ENCODE measurements at regions of chr3 and their contacts with region 1.

Region 1: DNA sequence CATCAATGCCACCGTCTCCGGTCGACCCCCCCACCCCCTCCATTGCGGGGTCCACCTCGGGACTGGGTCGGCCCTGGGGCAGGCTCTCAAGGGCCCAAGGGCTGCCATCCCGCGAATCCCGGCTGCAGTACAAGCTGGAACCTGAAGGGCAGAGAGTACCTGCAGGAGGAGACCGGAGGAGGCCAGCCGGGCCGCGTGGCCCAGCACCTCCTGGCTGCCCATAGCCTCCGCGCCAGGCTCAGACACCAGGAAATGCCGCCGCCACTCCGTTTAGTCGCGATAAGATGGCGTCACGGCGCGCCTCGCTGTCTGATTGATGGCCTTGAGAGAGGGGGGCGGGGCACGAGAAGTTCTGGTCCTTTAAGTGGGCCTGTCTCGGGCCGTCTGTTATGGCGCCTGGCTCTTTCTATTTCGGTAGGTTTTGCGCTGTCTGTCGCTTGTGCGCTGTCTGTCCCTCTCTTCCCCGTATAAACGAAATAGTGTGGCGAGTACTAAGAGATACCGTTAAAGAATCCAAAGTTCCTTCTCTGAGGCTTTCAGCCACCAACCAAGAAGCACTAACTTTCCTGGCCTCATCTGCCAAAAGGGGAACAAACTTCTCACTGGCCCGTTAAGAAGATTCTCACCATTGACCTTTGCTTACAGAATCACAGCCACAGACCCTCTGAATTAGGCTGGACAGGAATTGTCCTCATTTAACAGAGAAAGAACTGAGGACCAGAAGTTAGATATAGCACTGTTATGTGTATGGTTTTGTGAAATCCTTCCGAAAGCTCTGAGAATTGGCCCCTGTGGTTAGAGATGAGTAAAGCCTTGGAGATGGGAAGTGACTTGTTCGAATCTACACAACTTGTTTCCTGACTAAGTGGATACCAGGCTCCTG is at the start of gene RFT1:
- DNase-seq: peak; percentile 96 to 98
- ATAC-seq: peak; percentile 85 to 90
- H3K4me3 ChIP-seq: peak within 1 kb of the TSS; percentile 80 to 93 (median 92)
- H3K27ac ChIP-seq: peak within 1 kb of the TSS; percentile 91 to 94 (median 94)
- H3K4me1 ChIP-seq: peaks cover 29 to 32% of the 10 kb centered on the region in 2 donors
- H3K27me3 ChIP-seq: no peaks in the 10 kb centered on the region
- CTCF ChIP-seq: peak in 2 of 5 experiments; percentile 44 to 49
- POLR2A ChIP-seq: peak; percentile 62 to 71
- total RNA-seq, gene RFT1: 2.5 to 5.7 (median 5.2) TPM

Region 2: GRCh38 chr3:53045518-53046170 is 84.8 kb before region 1 on chr3 and contains the start of gene SFMBT1:
- in situ Hi-C with region 1: no loop called
- intact Hi-C with region 1: loop called (anchors 2 kb)
- DNase-seq: peak; percentile 36 to 55
- ATAC-seq: peak; percentile 77 to 82
- H3K4me3 ChIP-seq: peak within 1 kb of the TSS; percentile 81 to 94 (median 90)
- H3K27ac ChIP-seq: peak within 1 kb of the TSS; percentile 90 to 98 (median 95)
- H3K4me1 ChIP-seq: peaks cover 10 to 12% of the 10 kb centered on the region in 2 donors
- H3K27me3 ChIP-seq: no peaks in the 10 kb centered on the region
- CTCF ChIP-seq: no peak
- POLR2A ChIP-seq: peak; percentile 69 to 72
- total RNA-seq, gene SFMBT1: 17.5 to 39.7 (median 29.8) TPM

Region 3: GRCh38 chr3:53114011-53114400 is 16.4 kb before region 1 on chr3:
- in situ Hi-C with region 1: no loop called
- intact Hi-C with region 1: loop called (anchors 1 kb)
- DNase-seq: peak; percentile 65 to 73
- ATAC-seq: peak; percentile 89 to 90
- H3K4me3 ChIP-seq: no peak overlapping the region
- H3K27ac ChIP-seq: peak overlapping the region; percentile 62 to 76 (median 72)
- H3K4me1 ChIP-seq: peaks cover 26 to 31% of the 10 kb centered on the region in 2 donors
- H3K27me3 ChIP-seq: no peaks in the 10 kb centered on the region
- CTCF ChIP-seq: peak; percentile 86 to 94 (median 93)
- POLR2A ChIP-seq: no peak

Region 4: GRCh38 chr3:53160660-53161449 is 30.4 kb after region 1 on chr3 and contains the start of gene PRKCD:
- in situ Hi-C with region 1: no loop called
- intact Hi-C with region 1: loop called (anchors 1 kb)
- DNase-seq: peak; percentile 71 to 85
- ATAC-seq: peak; percentile 82 to 87
- H3K4me3 ChIP-seq: peak within 1 kb of the TSS; percentile 80 to 91 (median 83)
- H3K27ac ChIP-seq: peak within 1 kb of the TSS; percentile 79 to 87 (median 83)
- H3K4me1 ChIP-seq: peaks cover 17 to 20% of the 10 kb centered on the region in 2 donors
- H3K27me3 ChIP-seq: no peaks in the 10 kb centered on the region
- CTCF ChIP-seq: peak in 4 of 5 experiments; percentile 55 to 68 (median 63)
- POLR2A ChIP-seq: peak; percentile 67 to 80
- total RNA-seq, gene PRKCD: 2.1 to 5.9 (median 3.4) TPM

Region 5: DNA sequence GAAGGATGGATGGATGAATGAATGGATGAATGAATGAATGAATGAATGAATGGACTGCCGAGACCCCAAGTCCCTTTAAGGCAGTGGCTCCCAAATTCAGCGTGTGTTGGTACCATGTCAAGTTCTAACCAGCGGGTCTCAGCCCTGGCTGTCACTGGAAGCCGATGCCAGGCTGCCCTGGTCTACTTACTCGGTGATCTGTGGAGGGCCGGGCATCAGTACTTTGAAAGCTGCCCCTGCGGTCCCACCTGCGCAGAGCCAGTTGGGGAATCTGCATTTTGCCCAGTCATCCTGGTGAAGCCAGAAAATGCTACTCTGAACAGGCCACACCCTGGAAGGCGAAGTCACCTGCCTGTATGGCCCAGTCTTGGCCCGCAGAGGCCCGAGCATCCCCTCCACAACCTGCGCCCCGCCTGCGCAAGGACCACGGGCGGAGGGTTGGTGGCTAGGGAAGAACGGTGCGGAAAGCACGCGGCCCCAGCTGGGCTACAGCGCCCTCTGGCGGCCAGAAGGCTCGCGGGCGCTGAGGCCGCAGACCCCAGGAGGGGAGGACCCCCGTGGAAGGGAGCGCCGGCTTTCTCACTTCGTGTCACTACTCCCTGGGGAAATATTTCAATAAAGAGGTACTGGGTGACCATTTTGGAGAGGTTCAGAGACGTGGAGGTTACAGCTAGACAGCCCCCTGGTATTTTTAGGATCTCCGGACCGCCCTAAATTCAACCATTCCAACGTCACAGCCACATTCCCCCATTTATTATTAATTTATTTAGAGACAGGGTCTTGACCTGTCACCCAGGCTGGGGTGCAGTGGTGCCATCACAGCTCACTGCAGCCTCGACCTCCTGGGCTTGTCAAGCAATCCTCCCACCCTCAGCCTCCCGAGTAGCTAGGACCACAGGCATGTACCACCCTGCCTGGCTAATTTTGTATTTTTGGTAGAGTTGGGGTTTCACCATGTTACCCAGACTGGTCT is 65.5 kb after region 1 on chr3:
- in situ Hi-C with region 1: no loop called
- intact Hi-C with region 1: loop called (anchors 1 kb)
- DNase-seq: no peak
- ATAC-seq: peak; percentile 60 to 77
- H3K4me3 ChIP-seq: no peak overlapping the region
- H3K27ac ChIP-seq: no peak overlapping the region
- H3K4me1 ChIP-seq: peaks cover 13% of the 10 kb centered on the region in 2 donors
- H3K27me3 ChIP-seq: no peaks in the 10 kb centered on the region
- CTCF ChIP-seq: peak; percentile 89 to 100 (median 98)
- POLR2A ChIP-seq: no peak

Measured in gastrocnemius medialis (tissue), 4 donors.